Body of pancreas (tissue), 4 donors: ENCODE measurements at regions of chr20 and their contacts with region 1.

Region 1: DNA sequence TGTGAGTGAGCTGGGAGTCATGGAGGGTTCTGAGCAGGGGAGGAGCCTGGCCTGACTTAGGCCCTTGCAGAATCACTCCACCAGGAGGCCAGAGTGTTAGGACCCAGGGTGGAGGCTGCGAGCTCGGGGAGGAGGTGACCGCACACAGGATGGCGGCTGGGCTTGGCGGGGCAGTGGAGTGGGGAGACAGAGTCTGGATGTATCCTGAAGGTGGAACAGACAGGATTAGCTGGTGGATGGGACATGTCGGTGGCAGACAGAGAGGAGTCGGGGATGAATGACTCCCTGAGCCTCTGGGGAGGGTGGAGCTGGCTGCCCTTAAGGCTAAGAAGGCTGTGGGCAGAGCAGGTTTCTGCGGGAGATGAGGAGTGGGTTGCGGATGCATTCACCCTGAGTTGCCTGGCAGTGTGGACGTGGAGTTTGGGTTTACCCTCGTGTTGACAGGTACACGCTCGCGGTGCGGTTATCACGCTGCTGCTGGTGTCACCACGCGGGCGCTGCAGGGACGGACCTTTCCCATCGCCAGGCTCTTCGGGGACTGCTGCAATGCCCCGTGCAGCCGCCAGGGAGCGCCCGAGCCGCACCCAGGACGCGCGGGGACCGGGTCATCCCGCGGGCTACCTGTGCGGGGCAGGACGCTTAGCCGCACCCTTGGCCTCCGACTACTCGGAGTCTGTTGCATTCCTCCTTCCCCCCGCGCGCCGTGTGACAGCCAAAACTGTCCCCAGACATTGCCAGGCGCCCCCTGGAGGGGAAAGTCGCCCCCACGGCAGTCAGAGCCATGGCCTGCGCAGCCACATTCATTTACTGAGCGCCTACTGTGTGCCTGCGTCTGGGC is 43.0 kb upstream of the PTGIS start:
- DNase-seq: peak; percentile 80 to 84 (median 82)
- ATAC-seq: peak; percentile 82
- H3K4me3 ChIP-seq: no peak overlapping the region
- H3K27ac ChIP-seq: peak overlapping the region in 2 of 4 donors; percentile 50 to 55
- H3K4me1 ChIP-seq: peaks cover 22% of the 10 kb centered on the region
- H3K27me3 ChIP-seq: no peaks in the 10 kb centered on the region
- CTCF ChIP-seq: peak; percentile 98 to 100 (median 99)
- POLR2A ChIP-seq: no peak

Region 2: GRCh38 chr20:49338061-49338460 is 272.9 kb before region 1 on chr20:
- intact Hi-C with region 1: loop called (anchors 10 kb)
- DNase-seq: no peak
- ATAC-seq: no peak
- H3K4me3 ChIP-seq: no peak overlapping the region
- H3K27ac ChIP-seq: no peak overlapping the region
- H3K4me1 ChIP-seq: no peaks in the 10 kb centered on the region
- H3K27me3 ChIP-seq: no peaks in the 10 kb centered on the region
- CTCF ChIP-seq: no peak
- POLR2A ChIP-seq: no peak

Region 3: GRCh38 chr20:49541733-49542513 is 69.0 kb before region 1 on chr20:
- intact Hi-C with region 1: loop called (anchors 5 kb)
- DNase-seq: peak; percentile 58 to 71 (median 62)
- ATAC-seq: peak; percentile 67
- H3K4me3 ChIP-seq: no peak overlapping the region
- H3K27ac ChIP-seq: no peak overlapping the region
- H3K4me1 ChIP-seq: no peaks in the 10 kb centered on the region
- H3K27me3 ChIP-seq: peaks cover 0 to 1% of the 10 kb centered on the region in 2 donors
- CTCF ChIP-seq: peak; percentile 43 to 90 (median 77)
- POLR2A ChIP-seq: no peak

Region 4: DNA sequence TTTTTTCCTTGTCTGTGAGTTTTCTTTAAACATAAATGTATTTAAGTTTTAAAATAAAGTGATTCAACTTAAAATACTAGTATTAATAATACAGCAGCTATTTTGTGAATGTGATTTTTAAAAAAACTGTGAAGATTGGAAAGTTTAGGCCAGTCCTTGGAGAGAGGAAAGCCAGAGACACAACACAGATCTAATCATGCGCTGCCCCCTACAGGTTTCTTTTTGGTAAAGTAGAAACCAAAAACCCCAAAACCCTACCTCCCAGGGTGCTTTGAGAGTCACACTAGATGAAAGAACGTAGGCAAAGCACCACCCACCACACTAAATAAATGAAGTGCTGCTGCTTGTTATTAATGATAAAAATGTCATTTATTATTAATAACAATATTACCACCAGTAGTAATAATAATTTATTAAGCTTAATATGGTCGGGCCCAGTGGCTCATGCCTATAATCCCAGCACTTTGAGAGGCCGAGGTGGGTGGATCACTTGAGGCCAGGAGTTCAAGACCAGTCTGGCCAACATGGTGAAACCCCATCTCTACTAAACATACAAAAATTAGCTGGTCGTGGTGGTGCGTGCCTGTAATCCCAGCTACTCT is 235.4 kb after region 1 on chr20:
- intact Hi-C with region 1: loop called (anchors 10 kb)
- DNase-seq: peak; percentile 44 to 66 (median 52)
- ATAC-seq: peak; percentile 63
- H3K4me3 ChIP-seq: no peak overlapping the region
- H3K27ac ChIP-seq: no peak overlapping the region
- H3K4me1 ChIP-seq: no peaks in the 10 kb centered on the region
- H3K27me3 ChIP-seq: no peaks in the 10 kb centered on the region
- CTCF ChIP-seq: peak; percentile 37 to 62 (median 58)
- POLR2A ChIP-seq: no peak